Right lobe of liver (tissue), 6 donors: ENCODE measurements at regions of chr17 and their contacts with region 1.

Region 1: GRCh38 chr17:6639586-6640535 is 650 bp downstream of the KIAA0753 start:
- DNase-seq: peak; percentile 49 to 64 (median 55)
- ATAC-seq: peak; percentile 25 to 50 (median 40)
- H3K4me3 ChIP-seq: peak overlapping the region; percentile 85 to 98 (median 93)
- H3K27ac ChIP-seq: peak overlapping the region in 2 of 3 donors; percentile 84 to 92
- H3K4me1 ChIP-seq: peaks cover 0 to 29% (median 9%) of the 10 kb centered on the region in 4 donors
- H3K27me3 ChIP-seq: no peaks in the 10 kb centered on the region
- CTCF ChIP-seq: no peak
- POLR2A ChIP-seq: no peak

Region 2: DNA sequence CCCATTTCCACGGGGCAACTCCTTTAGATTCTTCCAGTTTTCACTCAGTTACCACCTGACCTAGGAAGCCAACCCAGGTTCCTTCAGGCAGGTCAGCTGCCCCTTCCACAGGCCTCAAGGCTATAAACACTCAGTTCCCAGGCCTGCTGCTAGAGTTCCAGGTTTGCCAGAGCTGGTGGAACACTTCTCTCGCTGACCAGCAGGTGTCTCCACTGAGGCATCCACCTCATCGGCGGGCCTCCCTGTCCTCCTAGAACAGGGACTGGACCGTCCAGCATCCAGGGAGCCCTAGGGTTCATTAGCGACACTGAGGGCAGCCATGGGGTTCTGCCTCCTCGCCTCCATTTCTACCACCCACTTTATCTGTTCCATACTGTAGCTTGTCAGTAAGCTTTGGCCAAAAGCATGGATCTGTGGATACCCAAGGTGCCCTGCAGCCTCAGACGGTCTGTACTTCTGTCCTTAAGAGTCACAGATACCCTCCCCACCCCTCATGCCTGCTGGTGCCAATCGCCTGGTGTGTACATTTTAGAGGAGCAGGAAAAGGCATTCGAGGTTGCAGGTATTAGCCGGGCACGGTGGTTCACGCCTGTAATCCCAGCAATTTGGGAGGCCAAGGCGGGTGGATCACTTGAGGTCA is 166.6 kb before region 1 on chr17:
- intact Hi-C with region 1: loop called (anchors 5 to 10 kb)
- DNase-seq: peak; percentile 81
- ATAC-seq: peak; percentile 80 to 95 (median 92)
- H3K4me3 ChIP-seq: no peak overlapping the region
- H3K27ac ChIP-seq: no peak overlapping the region
- H3K4me1 ChIP-seq: no peaks in the 10 kb centered on the region
- H3K27me3 ChIP-seq: no peaks in the 10 kb centered on the region
- CTCF ChIP-seq: peak; percentile 83 to 97 (median 94)
- POLR2A ChIP-seq: no peak

Region 3: GRCh38 chr17:6574687-6575595 is 64.9 kb before region 1 on chr17:
- intact Hi-C with region 1: loop called in 1 of 2 experiments (anchors 10 kb)
- DNase-seq: peak in 2 of 3 donors; percentile 54 to 63
- ATAC-seq: peak; percentile 67 to 84 (median 82)
- H3K4me3 ChIP-seq: no peak overlapping the region
- H3K27ac ChIP-seq: no peak overlapping the region
- H3K4me1 ChIP-seq: no peaks in the 10 kb centered on the region
- H3K27me3 ChIP-seq: no peaks in the 10 kb centered on the region
- CTCF ChIP-seq: no peak
- POLR2A ChIP-seq: no peak